ENCODE measurements at regions of chr10 and their contacts with region 1.

Region 1: GRCh38 chr10:74502963-74503608 is 323.3 kb upstream of the KAT6B start:
- DNase-seq: no peak
- ATAC-seq: peak; percentile 63
- H3K4me3 Mint-ChIP-seq: peak overlapping the region; percentile 6
- H3K27ac Mint-ChIP-seq: peak overlapping the region; percentile 81
- H3K4me1 Mint-ChIP-seq: peaks cover 47% of the 10 kb centered on the region
- H3K27me3 Mint-ChIP-seq: no peaks in the 10 kb centered on the region

Region 2: DNA sequence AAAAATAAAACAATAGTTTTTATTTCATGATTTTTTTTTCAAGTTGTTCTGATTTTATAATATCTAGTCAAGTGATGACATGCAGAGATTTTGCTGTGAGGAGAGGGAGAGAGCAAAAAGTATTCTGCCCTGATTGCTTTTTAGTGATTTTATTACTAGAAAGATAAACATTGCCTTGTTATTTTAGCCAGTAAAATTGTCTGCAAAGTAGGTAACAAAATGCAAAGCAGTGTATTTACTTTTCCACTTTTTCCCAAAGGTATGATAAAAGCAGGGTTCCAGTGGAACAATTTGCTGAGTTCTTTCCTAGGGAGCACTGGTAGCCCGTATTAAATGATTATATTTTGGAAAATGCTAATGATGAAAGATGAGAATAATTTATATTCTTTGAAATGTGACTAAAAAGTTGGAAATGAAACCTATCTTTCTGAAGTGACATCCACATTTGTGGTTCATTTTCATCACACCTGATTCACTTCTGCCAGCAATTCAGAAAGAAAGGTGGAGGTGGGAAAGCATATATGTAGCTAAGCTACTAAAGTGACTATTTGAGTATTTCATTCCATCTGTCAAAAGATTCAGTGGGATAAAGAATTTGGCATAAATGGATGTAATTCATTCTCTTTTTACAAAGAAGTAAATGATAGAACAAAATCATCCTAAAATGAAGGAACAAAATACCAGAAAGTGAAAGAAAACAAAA is 51.8 kb before region 1 on chr10:
- CTCF ChIA-PET with region 1: no interaction called
- POLR2A ChIA-PET with region 1: no interaction called
- intact Hi-C with region 1: loop called in 1 of 2 experiments (anchors 1 kb)
- DNase-seq: no peak
- ATAC-seq: peak; percentile 47
- H3K4me3 Mint-ChIP-seq: no peak overlapping the region
- H3K27ac Mint-ChIP-seq: peak overlapping the region; percentile 77
- H3K4me1 Mint-ChIP-seq: peaks cover 8% of the 10 kb centered on the region
- H3K27me3 Mint-ChIP-seq: no peaks in the 10 kb centered on the region

Region 3: DNA sequence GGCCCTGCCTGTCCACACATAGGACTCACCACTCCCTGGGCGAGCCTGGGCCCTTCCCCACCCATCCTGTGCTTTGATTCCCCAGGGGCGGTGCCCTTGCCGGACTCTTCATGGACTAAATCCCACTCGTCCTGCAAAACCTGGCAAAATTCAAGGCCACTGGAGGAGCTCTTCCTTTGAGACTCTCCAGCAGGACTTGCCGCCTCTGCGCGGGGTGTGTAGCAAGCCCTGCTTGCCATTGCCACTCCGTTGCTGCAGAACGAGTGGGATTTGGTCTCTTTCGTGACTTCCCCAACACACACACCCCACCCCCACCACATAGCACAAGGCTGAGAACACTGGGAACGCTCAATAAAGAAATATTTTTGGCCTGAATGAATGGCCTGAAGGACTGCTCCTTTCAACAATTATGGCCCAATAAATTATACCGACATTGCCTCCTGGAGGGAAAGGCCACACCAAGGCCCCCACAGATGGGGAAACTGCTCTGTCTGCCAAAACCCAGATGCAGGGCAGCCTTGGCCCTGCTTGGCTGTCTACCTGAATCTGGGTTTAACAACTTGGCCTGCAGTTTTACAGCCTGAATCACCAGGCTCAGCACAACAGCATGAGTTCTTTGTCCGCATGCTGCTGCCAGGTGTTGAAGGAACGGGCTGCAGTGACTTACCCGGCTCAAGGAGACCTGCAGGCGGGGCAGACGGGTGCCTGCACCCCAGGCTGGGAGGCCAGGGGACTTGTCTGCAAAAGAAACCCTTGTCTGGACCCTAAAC is 250.5 kb after region 1 on chr10:
- CTCF ChIA-PET with region 1: no interaction called
- POLR2A ChIA-PET with region 1: no interaction called
- intact Hi-C with region 1: no loop called
- DNase-seq: no peak
- ATAC-seq: no peak
- H3K4me3 Mint-ChIP-seq: no peak overlapping the region
- H3K27ac Mint-ChIP-seq: no peak overlapping the region
- H3K4me1 Mint-ChIP-seq: no peaks in the 10 kb centered on the region
- H3K27me3 Mint-ChIP-seq: no peaks in the 10 kb centered on the region

Region 4: GRCh38 chr10:74799721-74800221 is 296.7 kb after region 1 on chr10:
- CTCF ChIA-PET with region 1: no interaction called
- POLR2A ChIA-PET with region 1: no interaction called
- intact Hi-C with region 1: loop called in 1 of 2 experiments (anchors 5 kb)
- DNase-seq: peak; percentile 71
- ATAC-seq: peak; percentile 99
- H3K4me3 Mint-ChIP-seq: no peak overlapping the region
- H3K27ac Mint-ChIP-seq: peak overlapping the region; percentile 24
- H3K4me1 Mint-ChIP-seq: peaks cover 11% of the 10 kb centered on the region
- H3K27me3 Mint-ChIP-seq: no peaks in the 10 kb centered on the region